Activated CD8-positive, alpha-beta T cell treated with anti-CD3 and anti-CD28 coated beads for 36 hours (primary cell): ENCODE measurements at regions of chr2 and their contacts with region 1.

Region 1: DNA sequence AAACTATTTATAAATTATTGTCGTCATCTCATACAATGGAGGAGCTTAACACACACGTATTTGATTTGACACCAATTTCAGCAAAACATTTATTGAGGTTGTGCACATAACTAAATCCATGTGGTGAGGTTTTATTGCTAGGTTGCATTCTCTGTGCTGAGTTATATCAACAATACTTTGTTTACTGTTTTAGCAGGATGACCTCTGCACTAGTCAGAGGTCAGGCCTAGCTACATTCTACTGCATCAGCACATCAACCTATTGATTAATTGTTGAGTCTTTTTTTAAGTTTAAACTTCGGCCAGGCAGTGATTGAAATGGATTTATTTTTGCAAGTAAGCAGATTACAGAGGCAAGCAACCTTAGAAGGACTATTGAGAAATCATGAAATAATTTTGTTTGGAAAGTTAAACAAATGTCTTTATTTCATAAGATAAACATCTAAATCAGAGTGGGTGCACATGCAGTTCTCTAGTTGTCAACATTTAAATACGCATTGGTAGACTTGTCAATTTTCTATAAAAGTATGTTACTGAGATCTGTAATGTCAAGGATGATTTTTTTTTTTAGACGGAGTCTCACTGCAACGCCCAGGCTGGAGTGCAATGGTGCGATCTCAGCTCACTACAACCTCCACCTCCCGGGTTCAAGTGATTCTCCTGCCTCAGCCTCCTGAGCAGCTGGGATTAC is 75.2 kb upstream of the CD28 start:
- DNase-seq: no peak
- ATAC-seq: no peak
- H3K4me3 Mint-ChIP-seq: no peak overlapping the region
- H3K27ac Mint-ChIP-seq: no peak overlapping the region
- H3K4me1 Mint-ChIP-seq: no peaks in the 10 kb centered on the region
- H3K27me3 Mint-ChIP-seq: no peaks in the 10 kb centered on the region
- CTCF ChIP-seq: no peak

Region 2: DNA sequence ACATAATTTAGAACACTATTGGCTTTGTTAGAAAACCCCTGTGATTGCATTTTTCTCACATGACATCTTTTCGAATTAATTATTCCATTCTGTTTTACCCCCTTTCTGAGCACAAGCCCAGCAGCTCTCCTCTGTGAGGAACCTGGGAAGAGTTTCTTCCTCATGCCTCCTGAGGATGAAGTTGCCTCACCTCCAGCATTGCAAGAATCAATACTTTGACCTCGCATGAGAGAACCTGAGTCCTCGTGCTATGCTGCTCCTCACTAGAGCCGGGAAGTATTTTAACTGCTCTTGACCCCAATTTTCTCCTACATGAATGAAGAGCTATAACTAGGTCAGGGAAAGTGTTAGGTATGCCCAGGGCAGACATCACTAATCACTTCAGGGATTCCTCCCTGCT is 18.9 kb before region 1 on chr2:
- CTCF ChIA-PET with region 1: interaction called, 11 read pairs
- POLR2A ChIA-PET with region 1: no interaction called
- intact Hi-C with region 1: no loop called
- DNase-seq: no peak
- ATAC-seq: no peak
- H3K4me3 Mint-ChIP-seq: no peak overlapping the region
- H3K27ac Mint-ChIP-seq: no peak overlapping the region
- H3K4me1 Mint-ChIP-seq: no peaks in the 10 kb centered on the region
- H3K27me3 Mint-ChIP-seq: no peaks in the 10 kb centered on the region
- CTCF ChIP-seq: no peak